CD8-positive, alpha-beta T cell (primary cell): ENCODE measurements at regions of chr1 and their contacts with region 1.

Region 1: DNA sequence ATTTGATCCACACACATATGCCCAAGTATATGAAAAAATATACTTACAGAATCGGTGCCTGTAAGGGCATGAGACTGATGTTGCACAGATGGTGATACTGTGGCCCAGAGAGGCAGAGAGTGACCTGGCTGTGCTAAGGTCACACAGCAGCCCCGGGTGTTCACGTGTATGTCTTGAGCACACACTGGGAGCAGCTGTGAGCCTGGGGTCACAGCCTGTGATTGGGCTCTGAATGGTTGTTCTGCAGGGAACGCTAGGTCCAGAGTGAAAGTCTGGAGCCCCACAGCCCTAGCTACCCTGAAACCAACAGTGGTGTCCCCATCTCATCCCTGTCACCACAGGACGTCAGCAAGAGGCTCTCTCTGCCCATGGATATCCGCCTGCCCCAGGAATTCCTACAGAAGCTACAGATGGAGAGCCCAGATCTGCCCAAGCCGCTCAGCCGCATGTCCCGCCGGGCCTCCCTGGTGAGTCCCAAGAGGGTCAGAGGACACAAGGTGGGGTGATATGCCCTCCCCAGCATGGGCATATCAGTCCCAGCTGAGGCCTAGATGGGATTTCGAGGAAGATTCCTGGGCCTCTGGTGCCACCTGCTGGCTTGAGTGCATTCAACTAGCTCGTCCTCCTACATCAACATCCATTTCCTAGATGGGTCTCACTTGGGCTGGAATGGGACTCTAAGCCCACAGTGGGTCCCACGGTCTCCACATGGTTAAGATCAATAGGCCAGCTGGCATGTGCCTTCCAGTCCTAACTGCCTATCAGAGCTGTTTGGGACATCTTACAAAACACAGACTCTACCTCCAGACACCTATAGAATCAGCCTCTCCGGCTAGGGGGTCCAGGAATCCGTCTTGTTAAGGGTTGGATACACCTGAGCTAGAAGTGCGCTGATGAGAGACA is 19.7 kb downstream of the CDK18 start:
- DNase-seq: peak; percentile 47 to 82 (median 76)
- ATAC-seq: peak; percentile 70
- H3K4me3 ChIP-seq: no peak overlapping the region
- H3K4me3 Mint-ChIP-seq: no peak overlapping the region
- H3K27ac ChIP-seq: no peak overlapping the region
- H3K27ac Mint-ChIP-seq: no peak overlapping the region
- H3K4me1 ChIP-seq: no peaks in the 10 kb centered on the region
- H3K4me1 Mint-ChIP-seq: peaks cover under 1% of the 10 kb centered on the region
- H3K27me3 ChIP-seq: no peaks in the 10 kb centered on the region
- H3K27me3 Mint-ChIP-seq: no peaks in the 10 kb centered on the region
- CTCF ChIP-seq: peak; percentile 64

Region 2: DNA sequence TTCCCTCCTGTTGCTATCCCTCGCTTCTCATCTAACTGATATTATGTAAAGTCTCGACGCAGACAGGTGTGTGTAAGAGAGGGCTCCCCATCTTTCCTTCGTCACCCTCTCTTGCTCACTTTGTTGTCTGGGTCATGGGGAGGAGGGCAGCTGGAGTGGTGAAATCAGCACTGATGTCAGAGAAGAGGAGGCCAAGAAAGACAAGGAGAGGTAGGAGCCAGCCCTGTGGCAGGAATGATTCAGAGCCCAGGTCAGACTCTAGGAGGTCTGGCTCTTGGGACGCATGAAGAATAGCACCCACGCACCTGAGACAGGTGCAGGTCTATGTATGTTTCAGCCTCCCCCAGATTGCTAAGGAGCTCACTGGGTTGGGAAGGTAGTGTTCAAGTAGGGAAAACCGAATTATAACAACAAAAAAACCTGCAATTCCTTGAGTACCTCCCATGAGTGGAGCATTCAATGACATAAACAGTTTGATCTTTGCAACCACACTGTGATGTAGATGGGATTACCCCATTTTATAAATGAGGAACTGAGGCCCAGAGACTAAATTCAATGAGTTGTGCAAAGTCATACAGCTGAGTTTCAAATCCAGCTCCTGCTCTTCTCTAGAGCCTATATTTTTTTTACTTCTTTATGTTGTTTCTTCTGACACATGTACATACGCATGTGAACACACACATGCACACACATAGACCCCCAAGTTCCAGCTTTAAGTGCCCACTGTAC is 213.0 kb before region 1 on chr1:
- CTCF ChIA-PET with region 1: no interaction called
- POLR2A ChIA-PET with region 1: no interaction called
- intact Hi-C with region 1: no loop called
- DNase-seq: no peak
- ATAC-seq: no peak
- H3K4me3 ChIP-seq: no peak overlapping the region
- H3K4me3 Mint-ChIP-seq: peak overlapping the region; percentile 45
- H3K27ac ChIP-seq: peak overlapping the region in 1 of 2 experiments; percentile 14
- H3K27ac Mint-ChIP-seq: peak overlapping the region; percentile 96
- H3K4me1 ChIP-seq: peaks cover 84% of the 10 kb centered on the region
- H3K4me1 Mint-ChIP-seq: peaks cover 92% of the 10 kb centered on the region
- H3K27me3 ChIP-seq: no peaks in the 10 kb centered on the region
- H3K27me3 Mint-ChIP-seq: no peaks in the 10 kb centered on the region
- CTCF ChIP-seq: no peak

Region 3: DNA sequence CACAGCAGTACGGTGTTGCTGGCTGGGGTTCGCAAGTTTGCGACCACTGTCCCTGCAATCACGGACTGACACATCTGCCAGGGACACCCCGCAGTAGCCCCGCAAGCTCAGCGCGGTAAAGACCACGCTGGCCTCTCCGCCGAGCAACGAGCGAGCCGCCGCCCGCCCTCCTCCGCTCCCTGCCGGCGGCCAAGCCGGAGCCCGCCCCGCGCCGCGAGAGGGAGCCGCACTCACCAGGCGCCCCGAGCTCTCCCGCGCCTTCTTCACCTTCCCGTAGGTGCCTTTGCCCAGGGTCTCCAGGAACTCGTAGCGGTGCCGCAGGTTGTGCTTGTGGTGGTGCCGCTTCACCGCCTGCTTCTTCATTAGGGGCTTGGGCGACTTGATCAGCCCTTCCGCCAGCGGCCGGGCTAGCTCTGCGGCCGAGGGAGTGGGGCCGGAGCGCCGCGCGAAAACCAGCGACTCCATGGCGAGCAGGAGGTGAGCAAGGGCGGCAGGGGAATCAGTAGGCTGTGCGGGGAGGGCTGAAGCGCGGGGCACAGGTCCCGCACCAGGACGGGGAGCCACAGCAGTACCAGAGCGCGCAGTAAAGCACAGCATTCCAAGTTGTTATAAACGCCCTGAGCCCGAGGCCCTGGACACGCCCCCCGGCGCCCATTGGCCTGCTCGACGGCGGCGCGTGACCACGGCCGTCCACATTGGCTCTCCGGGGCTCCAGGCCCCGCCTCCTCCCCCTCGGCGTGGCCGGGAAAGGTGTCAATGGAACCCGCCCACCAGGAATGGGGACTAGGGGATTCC is 202.8 kb before region 1 on chr1 and contains the start of gene NUAK2:
- CTCF ChIA-PET with region 1: interaction called, 19 read pairs
- POLR2A ChIA-PET with region 1: no interaction called
- intact Hi-C with region 1: no loop called
- DNase-seq: peak; percentile 56 to 92 (median 86)
- ATAC-seq: peak; percentile 88
- H3K4me3 ChIP-seq: peak within 1 kb of the TSS; percentile 73 to 99
- H3K4me3 Mint-ChIP-seq: peak within 1 kb of the TSS; percentile 98
- H3K27ac ChIP-seq: peak within 1 kb of the TSS; percentile 68 to 72
- H3K27ac Mint-ChIP-seq: peak within 1 kb of the TSS; percentile 96
- H3K4me1 ChIP-seq: peaks cover 50% of the 10 kb centered on the region
- H3K4me1 Mint-ChIP-seq: peaks cover 71% of the 10 kb centered on the region
- H3K27me3 ChIP-seq: no peaks in the 10 kb centered on the region
- H3K27me3 Mint-ChIP-seq: no peaks in the 10 kb centered on the region
- CTCF ChIP-seq: peak; percentile 32
- total RNA-seq, gene NUAK2: 17.1 to 18.3 TPM

Region 4: GRCh38 chr1:205335643-205336091 is 188.5 kb before region 1 on chr1:
- CTCF ChIA-PET with region 1: interaction called, 23 read pairs
- POLR2A ChIA-PET with region 1: interaction called, 4 read pairs
- intact Hi-C with region 1: loop called (anchors 1 kb)
- DNase-seq: peak; percentile 52 to 86 (median 80)
- ATAC-seq: peak; percentile 99
- H3K4me3 ChIP-seq: no peak overlapping the region
- H3K4me3 Mint-ChIP-seq: no peak overlapping the region
- H3K27ac ChIP-seq: no peak overlapping the region
- H3K27ac Mint-ChIP-seq: no peak overlapping the region
- H3K4me1 ChIP-seq: no peaks in the 10 kb centered on the region
- H3K4me1 Mint-ChIP-seq: no peaks in the 10 kb centered on the region
- H3K27me3 ChIP-seq: no peaks in the 10 kb centered on the region
- H3K27me3 Mint-ChIP-seq: no peaks in the 10 kb centered on the region
- CTCF ChIP-seq: peak; percentile 85

Region 5: DNA sequence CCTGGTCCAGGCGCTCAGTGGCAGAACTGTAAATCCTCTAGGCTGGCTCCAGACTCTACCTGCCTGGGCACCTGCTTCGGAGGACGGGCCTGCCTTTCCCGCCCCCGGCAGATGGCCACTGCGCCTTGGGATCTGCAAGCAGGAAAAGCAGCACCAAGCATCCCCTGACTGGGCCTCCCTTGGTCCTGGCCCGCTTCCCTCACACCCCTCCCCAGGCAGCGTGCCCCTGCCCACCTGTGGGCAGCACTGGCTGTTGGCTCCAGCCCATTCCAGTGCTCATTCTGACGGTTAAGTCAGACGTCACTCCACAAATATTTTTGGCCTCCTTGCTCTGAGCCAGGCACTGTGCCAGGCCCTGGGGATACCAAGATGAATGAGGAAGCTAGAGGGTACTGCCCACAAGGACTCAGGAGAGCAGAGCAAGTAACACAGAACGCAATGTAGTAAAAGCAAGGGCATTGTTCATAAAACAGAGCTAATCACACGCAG is 46.3 kb before region 1 on chr1:
- CTCF ChIA-PET with region 1: interaction called, 366 read pairs
- POLR2A ChIA-PET with region 1: no interaction called
- intact Hi-C with region 1: no loop called
- DNase-seq: no peak
- ATAC-seq: no peak
- H3K4me3 ChIP-seq: no peak overlapping the region
- H3K4me3 Mint-ChIP-seq: no peak overlapping the region
- H3K27ac ChIP-seq: no peak overlapping the region
- H3K27ac Mint-ChIP-seq: no peak overlapping the region
- H3K4me1 ChIP-seq: peaks cover 27% of the 10 kb centered on the region
- H3K4me1 Mint-ChIP-seq: peaks cover 31% of the 10 kb centered on the region
- H3K27me3 ChIP-seq: peaks cover 0 to 4% of the 10 kb centered on the region in 2 experiments
- H3K27me3 Mint-ChIP-seq: peaks cover 29% of the 10 kb centered on the region
- CTCF ChIP-seq: no peak

Region 6: DNA sequence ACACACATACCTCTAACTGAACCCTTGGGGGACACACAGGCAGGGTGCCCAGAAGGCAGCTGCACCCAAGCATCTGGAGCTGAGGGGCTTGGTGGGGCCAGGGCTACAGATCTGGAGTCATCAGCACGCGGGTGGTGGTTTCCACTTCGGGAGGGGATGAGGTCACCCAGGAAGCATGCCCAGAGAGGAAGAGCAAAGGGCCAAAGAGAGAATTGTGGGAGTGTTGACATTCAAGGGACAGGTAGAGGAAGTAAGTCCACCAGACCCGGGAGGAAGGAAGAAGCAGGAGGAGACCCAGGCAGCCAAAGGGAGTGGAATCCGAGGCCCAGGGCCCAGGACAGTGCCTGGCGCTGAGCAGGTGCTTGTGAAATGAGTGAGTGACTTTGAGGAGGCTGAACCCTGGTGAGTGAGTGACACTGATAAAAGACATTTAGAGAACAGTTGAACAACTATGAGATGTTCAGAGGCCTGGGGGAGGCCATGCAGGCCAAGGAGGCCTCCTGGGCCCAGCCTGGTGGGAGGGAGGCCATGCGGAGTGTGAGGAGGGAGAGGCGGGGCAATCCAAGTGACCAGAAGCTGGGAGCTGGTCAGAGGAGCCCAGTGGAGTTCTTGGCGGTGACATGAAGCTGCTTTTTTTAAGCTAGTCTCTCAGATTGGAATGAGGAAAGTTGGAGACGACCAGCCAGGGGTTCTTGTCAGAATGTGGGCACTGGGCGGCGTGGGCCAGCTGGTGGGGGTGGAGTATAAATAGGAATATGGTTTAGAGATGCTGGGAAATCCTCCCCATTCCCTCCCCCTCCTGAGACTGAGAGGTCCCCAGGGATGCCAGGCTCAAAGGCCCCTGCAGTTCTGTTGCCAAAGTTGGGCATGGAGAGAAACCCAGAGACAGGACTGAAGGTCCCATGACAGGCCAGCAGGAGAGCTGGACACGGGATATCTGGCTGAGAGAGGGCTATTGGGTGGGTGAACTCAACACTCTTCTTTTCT is 11.8 kb before region 1 on chr1:
- CTCF ChIA-PET with region 1: interaction called, 14 read pairs
- POLR2A ChIA-PET with region 1: no interaction called
- intact Hi-C with region 1: no loop called
- DNase-seq: no peak
- ATAC-seq: no peak
- H3K4me3 ChIP-seq: no peak overlapping the region
- H3K4me3 Mint-ChIP-seq: no peak overlapping the region
- H3K27ac ChIP-seq: no peak overlapping the region
- H3K27ac Mint-ChIP-seq: peak overlapping the region; percentile 4
- H3K4me1 ChIP-seq: no peaks in the 10 kb centered on the region
- H3K4me1 Mint-ChIP-seq: no peaks in the 10 kb centered on the region
- H3K27me3 ChIP-seq: no peaks in the 10 kb centered on the region
- H3K27me3 Mint-ChIP-seq: no peaks in the 10 kb centered on the region
- CTCF ChIP-seq: no peak